ENCODE measurements at regions of chr6 and their contacts with region 1.

Region 1: GRCh38 chr6:134398453-134398852 is 80.5 kb upstream of the SGK1 start:
- DNase-seq: no peak
- ATAC-seq: no peak
- H3K4me3 ChIP-seq: no peak overlapping the region
- H3K27ac ChIP-seq: no peak overlapping the region
- H3K4me1 ChIP-seq: no peaks in the 10 kb centered on the region; the same call in 1 of the 2 replicates
- H3K27me3 ChIP-seq: no peaks in the 10 kb centered on the region
- CTCF ChIP-seq: no peak
- POLR2A ChIP-seq: no peak
- RAD21 ChIP-seq: no peak

Region 2: GRCh38 chr6:134211297-134211696 is 187.2 kb before region 1 on chr6:
- CTCF ChIA-PET with region 1: no interaction called
- POLR2A ChIA-PET with region 1: no interaction called
- dilution Hi-C with region 1: no loop called
- in situ Hi-C with region 1: no loop called
- intact Hi-C with region 1: no loop called
- DNase-seq: no peak
- ATAC-seq: no peak
- H3K4me3 ChIP-seq: no peak overlapping the region
- H3K27ac ChIP-seq: no peak overlapping the region
- H3K4me1 ChIP-seq: no peaks in the 10 kb centered on the region
- H3K27me3 ChIP-seq: no peaks in the 10 kb centered on the region
- CTCF ChIP-seq: no peak
- POLR2A ChIP-seq: no peak
- RAD21 ChIP-seq: no peak

Region 3: DNA sequence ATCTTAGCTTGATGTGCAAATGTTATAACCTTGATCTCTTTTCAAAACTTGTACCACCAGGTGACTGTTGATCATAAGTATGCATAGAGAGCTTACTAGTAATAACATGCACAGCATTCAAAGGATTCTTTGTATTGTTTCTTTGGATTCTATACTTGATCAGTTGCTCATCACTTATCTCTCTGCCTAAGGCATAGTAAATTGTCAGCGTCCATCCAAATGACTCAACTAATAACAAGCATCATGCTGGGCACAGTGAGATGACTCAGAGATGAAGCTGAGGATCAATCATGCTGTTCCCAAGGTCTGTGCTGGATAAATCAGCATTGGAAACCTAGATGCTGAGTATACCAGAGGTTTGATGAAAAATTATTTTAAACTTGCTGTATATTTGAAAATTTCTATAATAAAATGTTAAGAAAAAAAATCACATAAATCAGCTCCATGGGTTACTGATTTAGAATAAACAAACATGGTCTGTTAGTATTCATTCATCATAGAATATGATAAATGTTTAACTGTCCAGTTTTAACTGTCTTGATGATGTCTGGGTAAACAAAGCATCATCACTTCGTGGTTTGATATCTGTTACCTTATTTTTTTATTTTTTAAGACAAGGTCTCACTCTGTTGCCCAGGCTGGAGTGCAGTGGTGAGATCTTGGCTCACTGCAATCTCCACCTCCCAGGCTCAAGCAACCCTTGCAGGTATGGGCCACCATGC is 35.0 kb before region 1 on chr6:
- CTCF ChIA-PET with region 1: no interaction called
- POLR2A ChIA-PET with region 1: no interaction called
- dilution Hi-C with region 1: no loop called
- in situ Hi-C with region 1: no loop called
- intact Hi-C with region 1: loop called (anchors 5 kb)
- DNase-seq: peak; percentile 91
- ATAC-seq: peak; percentile 70
- H3K4me3 ChIP-seq: no peak overlapping the region
- H3K27ac ChIP-seq: no peak overlapping the region
- H3K4me1 ChIP-seq: no peaks in the 10 kb centered on the region
- H3K27me3 ChIP-seq: no peaks in the 10 kb centered on the region
- CTCF ChIP-seq: no peak
- POLR2A ChIP-seq: no peak
- RAD21 ChIP-seq: no peak

Region 4: DNA sequence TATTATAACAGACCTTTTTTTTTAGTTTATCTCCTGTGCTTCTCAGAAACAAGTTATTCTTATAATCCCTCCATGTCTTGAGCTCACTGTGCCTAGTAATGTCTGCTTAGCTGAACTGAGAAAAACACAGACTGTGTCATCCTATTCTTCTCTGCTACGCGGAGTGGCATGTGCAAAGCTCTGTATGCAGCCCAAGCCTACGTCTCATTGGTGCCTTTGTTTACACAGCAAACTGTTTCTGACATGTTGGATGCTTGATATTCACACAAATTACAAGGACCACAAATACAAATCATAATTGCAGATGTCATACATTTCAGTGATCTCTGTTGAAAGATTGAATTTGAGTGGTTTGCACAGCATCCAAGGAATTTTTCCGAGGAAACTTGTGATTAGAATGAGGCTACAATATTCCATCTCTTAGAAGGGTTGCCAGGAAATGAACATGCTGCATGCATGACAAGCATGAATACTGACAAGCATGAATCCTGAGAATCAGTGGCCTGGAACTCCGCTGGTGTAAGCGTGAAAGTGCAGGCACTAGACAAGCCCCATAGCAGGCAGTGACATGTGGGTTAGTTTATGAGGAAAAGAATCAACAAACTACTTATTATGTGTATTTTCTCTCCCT is 47.9 kb after region 1 on chr6:
- CTCF ChIA-PET with region 1: no interaction called
- POLR2A ChIA-PET with region 1: no interaction called
- dilution Hi-C with region 1: no loop called
- in situ Hi-C with region 1: no loop called
- intact Hi-C with region 1: no loop called
- DNase-seq: peak; percentile 78
- ATAC-seq: peak; percentile 67
- H3K4me3 ChIP-seq: no peak overlapping the region
- H3K27ac ChIP-seq: peak overlapping the region; percentile 26; the same call in 1 of the 2 replicates
- H3K4me1 ChIP-seq: peaks cover 10% of the 10 kb centered on the region
- H3K27me3 ChIP-seq: no peaks in the 10 kb centered on the region
- CTCF ChIP-seq: no peak
- POLR2A ChIP-seq: no peak
- RAD21 ChIP-seq: peak; percentile 15; the same call in 1 of the 2 replicates